Activated CD8-positive, alpha-beta T cell treated with anti-CD3 and anti-CD28 coated beads for 36 hours (primary cell): ENCODE measurements at regions of chr4 and their contacts with region 1.

Region 1: GRCh38 chr4:10730590-10730989 is 46.0 kb upstream of the CLNK start:
- DNase-seq: no peak
- ATAC-seq: peak; percentile 38
- H3K4me3 Mint-ChIP-seq: no peak overlapping the region
- H3K27ac Mint-ChIP-seq: peak overlapping the region; percentile 76
- H3K4me1 Mint-ChIP-seq: peaks cover 65% of the 10 kb centered on the region
- H3K27me3 Mint-ChIP-seq: no peaks in the 10 kb centered on the region
- CTCF ChIP-seq: no peak

Region 2: GRCh38 chr4:9931146-9931545 is 799.4 kb before region 1 on chr4:
- CTCF ChIA-PET with region 1: no interaction called
- POLR2A ChIA-PET with region 1: no interaction called
- intact Hi-C with region 1: no loop called
- DNase-seq: no peak
- ATAC-seq: no peak
- H3K4me3 Mint-ChIP-seq: no peak overlapping the region
- H3K27ac Mint-ChIP-seq: no peak overlapping the region
- H3K4me1 Mint-ChIP-seq: no peaks in the 10 kb centered on the region
- H3K27me3 Mint-ChIP-seq: no peaks in the 10 kb centered on the region
- CTCF ChIP-seq: no peak

Region 3: GRCh38 chr4:10655986-10656385 is 74.6 kb before region 1 on chr4:
- CTCF ChIA-PET with region 1: no interaction called
- POLR2A ChIA-PET with region 1: no interaction called
- intact Hi-C with region 1: loop called (anchors 2 kb)
- DNase-seq: no peak
- ATAC-seq: no peak
- H3K4me3 Mint-ChIP-seq: no peak overlapping the region
- H3K27ac Mint-ChIP-seq: peak overlapping the region; percentile 34
- H3K4me1 Mint-ChIP-seq: peaks cover 18% of the 10 kb centered on the region
- H3K27me3 Mint-ChIP-seq: no peaks in the 10 kb centered on the region
- CTCF ChIP-seq: no peak

Region 4: GRCh38 chr4:10671366-10671765 is 59.2 kb before region 1 on chr4:
- CTCF ChIA-PET with region 1: interaction called, 5 read pairs
- POLR2A ChIA-PET with region 1: no interaction called
- intact Hi-C with region 1: loop called (anchors 5 kb)
- DNase-seq: peak; percentile 47
- ATAC-seq: peak; percentile 94
- H3K4me3 Mint-ChIP-seq: no peak overlapping the region
- H3K27ac Mint-ChIP-seq: peak overlapping the region; percentile 92
- H3K4me1 Mint-ChIP-seq: peaks cover 34% of the 10 kb centered on the region
- H3K27me3 Mint-ChIP-seq: no peaks in the 10 kb centered on the region
- CTCF ChIP-seq: no peak

Region 5: GRCh38 chr4:10743357-10743756 is 12.8 kb after region 1 on chr4:
- CTCF ChIA-PET with region 1: no interaction called
- POLR2A ChIA-PET with region 1: no interaction called
- intact Hi-C with region 1: no loop called
- DNase-seq: no peak
- ATAC-seq: no peak
- H3K4me3 Mint-ChIP-seq: no peak overlapping the region
- H3K27ac Mint-ChIP-seq: no peak overlapping the region
- H3K4me1 Mint-ChIP-seq: peaks cover 1% of the 10 kb centered on the region
- H3K27me3 Mint-ChIP-seq: no peaks in the 10 kb centered on the region
- CTCF ChIP-seq: no peak

Region 6: DNA sequence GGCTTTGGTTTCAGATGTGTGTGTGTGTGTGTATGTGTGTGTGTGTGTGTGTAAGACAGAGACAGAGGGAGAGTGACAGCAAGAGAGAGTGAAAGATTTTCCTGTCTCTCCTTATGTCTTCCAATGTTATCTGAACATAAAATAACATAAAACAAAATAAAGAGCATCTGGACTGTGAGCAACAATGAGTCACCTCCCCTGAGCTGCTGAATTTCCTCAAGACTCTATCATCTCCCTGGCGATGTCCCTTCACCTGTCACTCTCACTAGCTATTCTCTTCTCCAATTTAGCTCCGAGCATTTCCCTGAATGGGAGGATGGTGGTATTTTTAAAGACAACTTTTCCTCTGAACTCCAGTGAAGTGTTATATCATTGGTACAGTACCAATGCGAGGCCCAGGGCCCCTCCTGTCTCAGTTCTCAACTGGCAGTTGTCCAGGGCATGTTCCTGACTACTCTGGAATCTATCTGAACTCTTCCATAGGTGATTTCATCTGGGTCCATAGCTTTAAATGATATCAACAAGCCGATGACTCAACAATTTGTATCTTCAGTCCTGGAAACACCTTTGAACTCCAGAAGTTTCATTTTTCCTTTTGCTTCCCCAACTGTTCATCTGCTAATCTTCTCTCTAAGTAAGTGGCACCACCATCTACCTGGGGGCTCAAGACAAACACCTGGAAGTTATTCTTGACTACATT is 149.0 kb after region 1 on chr4:
- CTCF ChIA-PET with region 1: no interaction called
- POLR2A ChIA-PET with region 1: no interaction called
- intact Hi-C with region 1: no loop called
- DNase-seq: no peak
- ATAC-seq: no peak
- H3K4me3 Mint-ChIP-seq: no peak overlapping the region
- H3K27ac Mint-ChIP-seq: no peak overlapping the region
- H3K4me1 Mint-ChIP-seq: no peaks in the 10 kb centered on the region
- H3K27me3 Mint-ChIP-seq: no peaks in the 10 kb centered on the region
- CTCF ChIP-seq: no peak

Region 7: GRCh38 chr4:10959586-10959985 is 229.0 kb after region 1 on chr4:
- CTCF ChIA-PET with region 1: no interaction called
- POLR2A ChIA-PET with region 1: interaction called, 3 read pairs
- intact Hi-C with region 1: loop called (anchors 10 kb)
- DNase-seq: no peak
- ATAC-seq: no peak
- H3K4me3 Mint-ChIP-seq: no peak overlapping the region
- H3K27ac Mint-ChIP-seq: no peak overlapping the region
- H3K4me1 Mint-ChIP-seq: peaks cover 10% of the 10 kb centered on the region
- H3K27me3 Mint-ChIP-seq: peaks cover 2% of the 10 kb centered on the region
- CTCF ChIP-seq: no peak